MCF 10A (cell line): ENCODE measurements at regions of chr14 and their contacts with region 1.

Region 1: GRCh38 chr14:53306267-53306721 is 153.2 kb upstream of the DDHD1 start:
- DNase-seq: peak; percentile 66
- H3K4me3 Mint-ChIP-seq: peak overlapping the region; percentile 74
- H3K27ac Mint-ChIP-seq: peak overlapping the region; percentile 63
- H3K4me1 Mint-ChIP-seq: no peaks in the 10 kb centered on the region
- H3K27me3 Mint-ChIP-seq: no peaks in the 10 kb centered on the region
- CTCF ChIP-seq: peak; percentile 68

Region 2: GRCh38 chr14:52299692-52300278 is 1006.5 kb before region 1 on chr14:
- CTCF ChIA-PET with region 1: no interaction called
- POLR2A ChIA-PET with region 1: no interaction called
- intact Hi-C with region 1: loop called (anchors 5 kb)
- DNase-seq: peak; percentile 60
- H3K4me3 Mint-ChIP-seq: no peak overlapping the region
- H3K27ac Mint-ChIP-seq: no peak overlapping the region
- H3K4me1 Mint-ChIP-seq: no peaks in the 10 kb centered on the region
- H3K27me3 Mint-ChIP-seq: no peaks in the 10 kb centered on the region
- CTCF ChIP-seq: peak; percentile 61

Region 3: DNA sequence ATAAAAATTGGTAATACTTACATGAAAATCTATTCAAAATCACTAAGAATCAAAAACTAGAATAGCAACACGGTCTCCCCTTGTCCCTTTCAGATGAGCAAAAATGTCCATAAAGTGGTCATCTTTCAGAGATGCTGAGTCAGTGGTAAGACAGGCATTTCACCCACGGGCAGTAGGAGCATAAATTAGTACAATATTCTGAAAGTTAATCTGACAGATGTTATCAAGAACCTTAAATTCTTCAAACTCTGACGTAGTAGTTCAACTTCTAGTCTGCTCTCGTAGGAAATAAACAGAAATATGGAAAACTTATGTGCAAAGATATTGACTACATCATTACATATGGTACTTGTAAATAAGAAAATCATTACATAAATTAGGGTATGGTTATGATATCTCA is 481.8 kb before region 1 on chr14:
- CTCF ChIA-PET with region 1: interaction called, 4 read pairs
- POLR2A ChIA-PET with region 1: no interaction called
- intact Hi-C with region 1: loop called (anchors 1 kb)
- DNase-seq: no peak
- H3K4me3 Mint-ChIP-seq: no peak overlapping the region
- H3K27ac Mint-ChIP-seq: no peak overlapping the region
- H3K4me1 Mint-ChIP-seq: no peaks in the 10 kb centered on the region
- H3K27me3 Mint-ChIP-seq: no peaks in the 10 kb centered on the region
- CTCF ChIP-seq: no peak

Region 4: GRCh38 chr14:53055003-53055402 is 251.3 kb before region 1 on chr14:
- CTCF ChIA-PET with region 1: interaction called, 7 read pairs
- POLR2A ChIA-PET with region 1: no interaction called
- intact Hi-C with region 1: loop called (anchors 2 kb)
- DNase-seq: peak; percentile 65
- H3K4me3 Mint-ChIP-seq: no peak overlapping the region
- H3K27ac Mint-ChIP-seq: no peak overlapping the region
- H3K4me1 Mint-ChIP-seq: no peaks in the 10 kb centered on the region
- H3K27me3 Mint-ChIP-seq: no peaks in the 10 kb centered on the region
- CTCF ChIP-seq: peak; percentile 56

Region 5: DNA sequence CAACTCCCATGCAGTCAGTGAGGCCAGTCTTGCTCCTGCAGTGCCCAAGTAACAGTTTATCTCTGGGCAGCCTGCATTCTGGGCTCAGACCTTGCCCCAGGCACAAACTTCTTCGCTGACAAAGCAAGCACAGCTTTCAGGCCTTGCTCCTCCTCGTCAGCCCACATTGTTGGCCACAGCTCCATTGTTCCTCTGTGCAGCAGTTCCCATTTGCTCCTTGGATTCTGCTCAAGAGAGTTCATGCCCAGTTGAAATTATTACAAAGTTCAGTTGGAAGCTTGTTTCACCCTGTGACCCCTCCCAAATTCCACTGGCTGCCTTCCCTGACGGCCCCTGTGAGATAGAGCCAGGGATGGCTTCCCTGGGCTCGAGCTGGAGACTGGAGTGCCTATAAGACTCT is 10.2 kb after region 1 on chr14:
- CTCF ChIA-PET with region 1: interaction called, 12 read pairs
- POLR2A ChIA-PET with region 1: interaction called, 3 read pairs
- intact Hi-C with region 1: no loop called
- DNase-seq: no peak
- H3K4me3 Mint-ChIP-seq: no peak overlapping the region
- H3K27ac Mint-ChIP-seq: no peak overlapping the region
- H3K4me1 Mint-ChIP-seq: no peaks in the 10 kb centered on the region
- H3K27me3 Mint-ChIP-seq: no peaks in the 10 kb centered on the region
- CTCF ChIP-seq: no peak

Region 6: GRCh38 chr14:53881161-53881871 is 575.0 kb after region 1 on chr14:
- CTCF ChIA-PET with region 1: no interaction called
- POLR2A ChIA-PET with region 1: no interaction called
- intact Hi-C with region 1: no loop called
- DNase-seq: no peak
- H3K4me3 Mint-ChIP-seq: no peak overlapping the region
- H3K27ac Mint-ChIP-seq: no peak overlapping the region
- H3K4me1 Mint-ChIP-seq: no peaks in the 10 kb centered on the region
- H3K27me3 Mint-ChIP-seq: no peaks in the 10 kb centered on the region
- CTCF ChIP-seq: no peak

Region 7: DNA sequence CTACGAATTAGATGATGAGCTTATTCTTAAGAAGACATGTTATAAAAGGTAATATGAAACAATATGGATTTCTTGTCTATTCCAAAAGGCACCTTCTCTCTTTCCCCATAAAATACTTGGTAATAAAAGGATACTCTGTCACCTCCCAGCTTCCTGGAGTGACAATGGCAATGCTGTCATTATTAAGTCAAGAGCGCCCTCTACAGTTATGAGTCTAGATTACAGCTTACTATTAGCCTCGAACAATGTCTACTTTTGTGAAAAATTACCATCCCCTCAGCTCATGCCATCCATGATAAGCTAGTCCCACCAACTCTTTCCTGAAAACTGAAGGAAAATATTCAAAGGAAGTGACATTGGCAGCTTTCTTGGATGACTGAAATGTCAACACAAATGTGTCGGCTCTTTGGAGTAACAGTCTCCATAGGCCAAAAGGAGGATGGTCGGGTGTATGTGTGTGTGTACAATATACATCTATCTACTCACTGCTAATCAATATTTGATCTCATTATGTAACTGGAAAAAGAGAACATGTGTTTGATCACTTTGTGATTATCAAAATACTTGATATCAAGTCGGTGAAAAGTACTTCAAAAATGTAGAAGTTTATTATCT is 1041.8 kb after region 1 on chr14:
- CTCF ChIA-PET with region 1: interaction called, 16 read pairs
- POLR2A ChIA-PET with region 1: no interaction called
- intact Hi-C with region 1: no loop called
- DNase-seq: peak; percentile 68
- H3K4me3 Mint-ChIP-seq: no peak overlapping the region
- H3K27ac Mint-ChIP-seq: no peak overlapping the region
- H3K4me1 Mint-ChIP-seq: peaks cover 6% of the 10 kb centered on the region
- H3K27me3 Mint-ChIP-seq: no peaks in the 10 kb centered on the region
- CTCF ChIP-seq: peak; percentile 82